ENCODE measurements at regions of chr20 and their contacts with region 1.

Region 1: GRCh38 chr20:58236612-58237330 is 8.3 kb upstream of the ANKRD60 start:
- DNase-seq: peak; percentile 63 to 94
- H3K4me3 ChIP-seq: no peak overlapping the region
- CTCF ChIP-seq: peak in 2 of 3 donors; percentile 68 to 76
- POLR2A ChIP-seq: no peak

Region 2: DNA sequence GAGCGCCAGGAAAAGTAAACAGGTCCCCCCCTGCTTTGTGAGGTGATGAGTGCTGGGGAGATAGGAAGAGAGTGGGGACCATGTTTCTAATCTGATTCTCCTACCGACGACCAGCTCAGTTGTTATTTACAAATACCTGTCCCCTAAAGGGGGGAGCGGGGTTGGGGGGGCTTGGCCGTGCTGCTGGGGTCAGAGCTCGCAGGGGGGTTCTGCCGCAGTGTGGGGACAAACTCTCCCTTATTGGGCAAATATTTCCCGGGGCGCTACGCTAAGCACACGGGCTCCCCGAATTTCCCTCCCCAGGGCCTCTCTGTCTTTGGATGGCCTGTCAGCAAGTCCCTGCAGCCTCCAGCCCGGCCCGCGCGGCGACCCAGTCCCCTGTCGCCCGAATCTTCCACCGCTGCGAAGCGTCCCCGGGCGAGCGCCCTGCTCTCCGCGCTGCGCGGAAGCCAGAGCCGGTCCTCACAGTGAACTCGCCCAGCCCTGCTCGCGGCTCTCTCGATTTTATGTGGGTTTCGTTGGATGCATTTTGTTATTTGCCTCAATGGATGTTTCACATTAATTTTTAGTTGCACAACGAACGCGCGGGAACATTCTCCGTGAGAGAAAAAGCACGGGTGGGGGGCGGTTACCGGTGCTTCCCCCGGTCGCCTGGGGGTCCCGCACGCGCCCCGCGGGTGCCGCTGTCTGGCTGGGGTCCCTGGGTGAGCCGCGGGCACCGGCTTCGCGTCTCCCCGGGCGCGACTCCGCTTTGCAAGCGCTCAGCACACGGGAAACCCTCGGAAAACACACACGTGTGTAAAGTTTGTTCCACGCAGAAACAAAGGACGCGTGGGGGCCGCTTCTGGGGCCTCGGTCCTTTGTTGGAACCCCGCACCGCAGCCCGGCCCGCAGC is 412.8 kb after region 1 on chr20:
- intact Hi-C with region 1: loop called (anchors 10 kb)
- DNase-seq: no peak
- H3K4me3 ChIP-seq: peak overlapping the region; percentile 21
- CTCF ChIP-seq: no peak
- POLR2A ChIP-seq: no peak

Region 3: GRCh38 chr20:58850693-58851174 is 614.0 kb after region 1 on chr20 and contains the start of gene GNAS-AS1:
- intact Hi-C with region 1: loop called (anchors 10 kb)
- DNase-seq: peak; percentile 37 to 92
- H3K4me3 ChIP-seq: peak within 1 kb of the TSS; percentile 4
- CTCF ChIP-seq: no peak
- POLR2A ChIP-seq: no peak
- total RNA-seq, gene GNAS-AS1: 0.39 TPM in 1 of 4 donors, not detected in the others